Activated CD4-positive, alpha-beta memory T cell treated with anti-CD3 and anti-CD28 coated beads for 36 hours (primary cell): ENCODE measurements at regions of chr12 and their contacts with region 1.

Region 1: DNA sequence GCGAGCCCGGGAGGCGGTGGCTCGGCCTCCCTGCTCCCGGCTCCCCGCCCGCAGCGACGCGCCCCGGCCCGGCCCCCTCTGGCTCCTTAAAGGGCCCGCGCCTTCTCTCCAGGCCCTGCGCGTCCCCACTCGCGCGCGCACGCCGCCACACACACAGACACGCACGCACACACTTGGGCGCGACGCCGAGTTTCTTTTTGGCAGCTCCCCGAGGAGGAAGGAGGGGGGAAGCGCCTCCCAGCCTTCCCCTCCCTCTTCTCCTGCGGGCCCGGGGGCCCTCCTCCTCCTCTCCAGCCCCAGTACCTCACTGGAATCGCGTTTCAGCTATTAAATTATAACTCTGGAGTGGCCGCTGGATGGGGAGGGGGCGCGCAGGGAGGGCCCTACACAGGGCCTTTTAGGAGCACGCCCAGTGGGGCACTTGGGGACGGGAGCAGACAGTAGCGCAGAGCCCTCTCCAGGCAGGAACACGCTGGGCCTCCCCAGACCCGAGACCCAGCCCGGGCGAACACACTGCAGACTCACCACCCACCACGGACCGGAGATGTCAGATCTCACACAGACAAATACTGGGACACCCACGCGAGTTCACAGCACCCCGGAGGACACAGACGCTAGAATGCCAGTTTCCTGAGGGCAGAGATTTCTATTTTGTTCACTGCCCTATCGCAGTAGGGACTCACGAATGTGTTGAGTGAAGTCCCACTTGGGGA is 405 bp upstream of the NCOR2 start:
- DNase-seq: peak; percentile 83
- H3K4me3 Mint-ChIP-seq: peak overlapping the region; percentile 74
- H3K27ac Mint-ChIP-seq: peak overlapping the region; percentile 42
- H3K4me1 Mint-ChIP-seq: peaks cover 26% of the 10 kb centered on the region
- H3K27me3 Mint-ChIP-seq: no peaks in the 10 kb centered on the region

Region 2: DNA sequence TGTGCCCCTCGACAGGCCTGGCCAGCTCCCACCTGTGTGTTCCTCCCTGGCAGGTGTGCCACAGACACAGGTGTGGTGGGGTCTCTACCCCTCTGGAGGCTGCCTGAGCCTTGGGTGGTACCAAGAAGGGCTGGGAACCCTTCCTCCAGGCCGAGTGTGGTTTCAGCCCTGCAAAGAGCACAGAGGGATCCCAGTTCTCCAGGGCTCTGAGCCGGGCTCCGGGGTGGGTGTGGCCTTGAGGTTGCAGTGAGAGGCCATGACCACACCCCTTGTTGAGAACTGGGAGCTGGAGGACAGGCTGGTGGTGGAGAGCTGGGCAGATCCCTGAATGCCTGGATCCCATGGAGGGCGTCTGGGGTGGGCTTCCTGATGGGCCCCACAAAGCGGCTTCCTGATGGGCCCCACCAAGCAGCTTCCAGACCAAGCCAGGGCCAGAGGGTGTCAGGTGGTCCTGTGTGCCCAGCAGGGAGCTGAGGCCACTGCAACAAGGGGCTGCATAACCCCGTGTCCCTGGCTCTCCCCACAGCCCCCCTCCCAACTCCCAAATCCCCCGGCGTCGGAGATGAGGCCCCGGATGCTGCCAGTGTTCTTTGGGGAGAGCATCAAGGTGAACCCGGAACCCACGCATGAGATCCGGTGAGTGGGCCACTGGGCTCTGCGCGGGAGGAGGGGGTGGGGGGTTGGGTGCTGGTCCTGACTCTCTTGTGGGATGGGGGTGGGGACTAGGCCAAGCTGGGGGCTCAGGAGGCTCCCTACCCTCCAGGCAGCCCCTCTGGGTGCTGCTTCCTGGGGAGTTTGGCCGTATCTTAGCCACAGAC is 256.3 kb before region 1 on chr12:
- CTCF ChIA-PET with region 1: no interaction called
- POLR2A ChIA-PET with region 1: no interaction called
- intact Hi-C with region 1: no loop called
- DNase-seq: no peak
- H3K4me3 Mint-ChIP-seq: no peak overlapping the region
- H3K27ac Mint-ChIP-seq: no peak overlapping the region
- H3K4me1 Mint-ChIP-seq: no peaks in the 10 kb centered on the region
- H3K27me3 Mint-ChIP-seq: no peaks in the 10 kb centered on the region

Region 3: GRCh38 chr12:124388679-124389536 is 178.9 kb before region 1 on chr12:
- CTCF ChIA-PET with region 1: no interaction called
- POLR2A ChIA-PET with region 1: no interaction called
- intact Hi-C with region 1: loop called (anchors 5 kb)
- DNase-seq: peak; percentile 79
- H3K4me3 Mint-ChIP-seq: peak overlapping the region; percentile 29
- H3K27ac Mint-ChIP-seq: no peak overlapping the region
- H3K4me1 Mint-ChIP-seq: peaks cover 35% of the 10 kb centered on the region
- H3K27me3 Mint-ChIP-seq: no peaks in the 10 kb centered on the region

Region 4: DNA sequence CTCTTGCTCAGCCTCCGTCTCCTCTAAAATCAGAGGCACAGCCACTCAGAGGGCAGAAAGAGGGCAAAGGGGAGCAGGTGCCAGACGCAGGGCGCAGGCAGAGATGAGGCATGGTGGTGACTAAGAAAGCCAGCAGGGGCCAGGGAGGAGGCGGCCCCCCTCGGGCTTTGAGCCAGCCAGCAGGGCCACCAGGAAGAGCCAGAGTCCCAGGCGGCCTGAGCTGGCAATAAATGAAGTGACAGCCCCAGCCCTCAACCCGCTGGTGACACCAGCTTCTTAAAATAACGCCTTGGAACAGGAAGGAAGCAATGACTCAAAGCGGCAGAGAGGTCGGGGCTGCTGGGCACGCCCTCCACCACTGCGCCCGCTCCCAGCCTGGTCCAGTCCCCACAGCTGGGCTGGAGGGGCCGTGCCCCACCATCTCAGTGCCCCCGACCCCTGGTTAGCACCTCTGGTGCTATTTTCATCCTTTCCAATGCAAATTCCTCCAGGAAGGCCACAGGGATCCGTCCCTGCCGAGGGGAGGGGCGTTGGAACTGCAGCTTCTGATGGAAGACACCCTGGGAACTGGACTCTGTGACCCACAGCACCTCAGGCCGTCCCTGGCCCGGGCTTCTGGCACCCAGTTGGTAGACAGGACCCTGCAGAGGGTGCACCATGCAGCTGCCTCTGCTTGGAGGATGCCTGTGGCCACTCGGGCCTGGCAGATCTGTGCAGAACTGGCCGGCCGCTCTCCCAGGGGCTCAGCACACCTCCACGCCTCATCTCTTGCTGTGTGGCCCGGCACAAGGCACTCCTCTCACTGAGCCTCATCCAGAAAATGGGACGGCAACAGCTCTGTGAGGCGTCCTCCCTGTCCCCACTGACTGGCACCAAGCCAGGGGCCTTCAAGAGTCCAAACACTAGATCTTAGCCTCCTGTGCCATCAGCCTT is 114.1 kb before region 1 on chr12:
- CTCF ChIA-PET with region 1: interaction called, 5 read pairs
- POLR2A ChIA-PET with region 1: interaction called, 3 read pairs
- intact Hi-C with region 1: loop called (anchors 2 kb)
- DNase-seq: peak; percentile 94
- H3K4me3 Mint-ChIP-seq: peak overlapping the region; percentile 12
- H3K27ac Mint-ChIP-seq: peak overlapping the region; percentile 54
- H3K4me1 Mint-ChIP-seq: peaks cover 52% of the 10 kb centered on the region
- H3K27me3 Mint-ChIP-seq: no peaks in the 10 kb centered on the region

Region 5: GRCh38 chr12:124493809-124494750 is 73.7 kb before region 1 on chr12:
- CTCF ChIA-PET with region 1: interaction called, 3 read pairs
- POLR2A ChIA-PET with region 1: interaction called, 3 read pairs
- intact Hi-C with region 1: loop called (anchors 5 kb)
- DNase-seq: peak; percentile 86
- H3K4me3 Mint-ChIP-seq: no peak overlapping the region
- H3K27ac Mint-ChIP-seq: peak overlapping the region; percentile 81
- H3K4me1 Mint-ChIP-seq: peaks cover 49% of the 10 kb centered on the region
- H3K27me3 Mint-ChIP-seq: no peaks in the 10 kb centered on the region

Region 6: DNA sequence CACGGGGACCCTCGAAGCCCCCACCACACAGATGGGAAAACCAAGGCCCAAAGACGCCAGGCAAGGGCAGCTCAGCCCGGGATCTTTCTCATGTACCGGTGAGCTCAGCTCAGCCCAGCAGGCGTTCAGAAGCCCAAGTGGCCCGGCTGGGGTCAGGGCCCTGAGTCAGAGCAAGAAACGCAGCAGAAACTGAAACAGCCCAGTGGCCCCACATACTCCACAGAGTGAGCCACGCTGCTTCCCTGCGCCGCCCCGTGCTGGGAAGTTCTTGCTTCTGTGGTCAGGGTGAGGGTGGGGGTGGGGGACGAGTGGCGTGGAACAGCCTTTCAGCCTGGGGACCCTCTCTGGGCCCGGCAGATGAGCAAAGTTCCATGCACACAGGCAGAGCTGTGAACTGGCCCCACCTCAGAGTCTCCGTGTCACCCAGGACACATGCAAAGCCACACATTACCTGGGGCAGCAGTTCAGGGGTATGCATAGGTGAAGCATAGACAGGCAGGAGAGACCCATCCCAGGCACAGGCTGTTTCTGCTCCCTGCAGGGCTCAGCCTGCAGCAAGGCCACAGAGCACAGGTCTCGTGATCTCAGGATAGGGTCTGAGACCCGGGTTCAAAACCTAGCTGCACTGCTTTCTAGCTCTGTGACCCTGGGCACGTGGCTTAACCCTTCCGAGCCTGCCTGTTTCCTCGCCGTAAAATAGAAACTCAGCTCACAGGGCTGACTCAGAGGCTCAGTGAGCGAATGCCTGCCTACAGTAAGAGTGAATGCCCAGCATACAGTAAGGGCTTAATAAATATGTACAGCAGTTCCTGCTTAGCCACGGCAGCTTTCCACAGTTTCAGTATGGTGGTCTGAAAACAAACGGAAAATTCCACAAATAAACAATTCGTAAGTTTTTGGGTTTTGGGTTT is 22.1 kb before region 1 on chr12:
- CTCF ChIA-PET with region 1: no interaction called
- POLR2A ChIA-PET with region 1: interaction called, 8 read pairs
- intact Hi-C with region 1: loop called (anchors 1 kb)
- DNase-seq: peak; percentile 85
- H3K4me3 Mint-ChIP-seq: no peak overlapping the region
- H3K27ac Mint-ChIP-seq: peak overlapping the region; percentile 70
- H3K4me1 Mint-ChIP-seq: peaks cover 72% of the 10 kb centered on the region
- H3K27me3 Mint-ChIP-seq: no peaks in the 10 kb centered on the region

Region 7: DNA sequence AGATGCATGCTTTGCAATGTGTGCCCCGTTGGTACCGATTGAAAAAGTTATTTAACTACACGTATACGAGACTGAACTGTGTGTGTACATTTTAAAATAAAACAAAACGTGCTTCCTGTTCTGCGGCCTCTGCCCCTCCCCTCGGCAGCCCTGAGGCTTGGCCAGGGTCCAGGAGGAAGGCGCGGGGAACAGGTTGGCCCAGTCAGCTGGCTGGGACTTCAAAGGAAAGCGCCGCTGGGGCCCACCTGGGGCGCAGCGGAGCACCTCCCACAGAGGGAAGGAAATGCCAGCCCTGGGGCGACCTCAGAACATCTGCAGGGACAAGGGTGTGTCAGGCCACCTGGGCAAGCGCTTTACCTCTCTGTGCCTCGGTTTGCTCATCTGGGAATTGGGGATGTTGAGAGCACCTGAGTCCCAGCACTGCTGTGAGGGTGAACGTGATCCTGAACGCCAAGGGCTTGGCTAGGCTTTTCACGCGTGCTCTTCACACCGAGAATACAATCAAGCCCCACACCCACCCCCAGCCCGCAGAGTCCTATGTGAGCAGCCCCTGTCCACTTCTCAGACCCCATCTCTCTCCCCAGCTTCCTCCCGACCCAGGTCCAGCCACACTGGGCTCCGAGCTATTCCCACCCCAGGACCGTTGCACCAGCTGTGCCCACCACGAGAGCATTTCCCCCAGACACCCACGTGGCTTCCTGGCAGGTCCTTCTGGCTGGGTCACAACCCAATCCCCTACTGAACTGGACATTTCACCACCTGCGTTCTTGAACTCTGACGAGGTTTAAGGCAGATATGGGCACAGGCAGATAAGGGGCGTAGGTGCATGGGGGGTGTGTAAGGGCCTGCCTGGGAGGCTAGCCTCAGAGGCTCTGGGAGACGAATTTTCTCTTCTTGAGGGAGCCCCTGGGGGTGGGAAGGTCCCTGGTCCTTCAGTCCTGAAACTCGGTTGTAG is 41.5 kb after region 1 on chr12:
- CTCF ChIA-PET with region 1: no interaction called
- POLR2A ChIA-PET with region 1: no interaction called
- intact Hi-C with region 1: loop called (anchors 2 kb)
- DNase-seq: peak; percentile 89
- H3K4me3 Mint-ChIP-seq: peak overlapping the region; percentile 7
- H3K27ac Mint-ChIP-seq: no peak overlapping the region
- H3K4me1 Mint-ChIP-seq: peaks cover 30% of the 10 kb centered on the region
- H3K27me3 Mint-ChIP-seq: peaks cover 3% of the 10 kb centered on the region

Region 8: DNA sequence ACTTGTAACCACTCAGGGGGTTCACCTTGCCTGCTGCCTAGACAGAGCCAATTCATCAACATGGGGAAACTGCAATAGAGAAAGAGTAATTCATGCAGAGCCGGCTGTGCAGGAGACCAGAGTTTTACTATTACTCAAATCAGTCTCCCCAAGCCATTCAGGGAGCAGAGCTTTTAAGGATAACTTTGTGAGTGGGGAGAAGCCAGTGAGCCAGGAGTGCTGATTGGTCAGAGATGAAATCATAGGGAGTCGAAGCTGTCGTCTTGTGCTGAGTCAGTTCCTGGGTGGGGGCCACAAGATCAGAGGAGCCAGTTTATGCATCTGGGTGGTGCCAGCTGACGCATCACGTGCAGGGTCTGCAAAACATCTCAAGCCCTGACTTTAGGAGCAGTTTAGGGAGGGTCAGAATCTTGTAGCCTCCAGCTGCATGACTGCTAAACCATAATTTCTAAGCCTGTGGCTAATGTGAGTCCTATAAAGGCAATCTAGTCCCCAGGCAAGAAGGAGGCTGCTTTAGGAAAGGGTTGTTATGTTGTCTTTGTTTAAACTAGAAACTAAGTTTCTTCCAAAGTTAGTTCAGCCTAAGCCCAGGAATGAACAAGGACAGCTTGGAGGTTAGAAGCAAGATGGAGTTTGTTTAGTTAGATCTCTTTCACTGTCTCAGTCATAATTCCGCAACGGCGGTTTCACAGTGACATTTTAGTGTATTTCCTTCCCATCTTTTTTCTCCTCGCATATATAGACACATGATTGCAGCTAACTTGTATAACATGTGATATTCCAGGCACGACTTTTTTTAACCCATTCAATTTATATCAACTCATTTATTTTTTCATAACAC is 68.5 kb after region 1 on chr12:
- CTCF ChIA-PET with region 1: no interaction called
- POLR2A ChIA-PET with region 1: no interaction called
- intact Hi-C with region 1: loop called (anchors 5 kb)
- DNase-seq: peak; percentile 87
- H3K4me3 Mint-ChIP-seq: no peak overlapping the region
- H3K27ac Mint-ChIP-seq: no peak overlapping the region
- H3K4me1 Mint-ChIP-seq: peaks cover 16% of the 10 kb centered on the region
- H3K27me3 Mint-ChIP-seq: peaks cover 2% of the 10 kb centered on the region